Dendritic cell treated with granulocyte-macrophage colony-stimulating factor and Interleukin-4, amounts not matched to agents 40 ng/mL and 50 ng/mL, for 4 days (primary cell): ENCODE measurements at regions of chr4 and their contacts with region 1.

Region 1: GRCh38 chr4:26020083-26020668 is 106.2 kb downstream of the SMIM20 start:
- H3K4me3 Mint-ChIP-seq: no peak overlapping the region
- H3K27ac Mint-ChIP-seq: peak overlapping the region; percentile 70
- H3K4me1 Mint-ChIP-seq: peaks cover 71% of the 10 kb centered on the region
- H3K27me3 Mint-ChIP-seq: peaks cover 15% of the 10 kb centered on the region

Region 2: DNA sequence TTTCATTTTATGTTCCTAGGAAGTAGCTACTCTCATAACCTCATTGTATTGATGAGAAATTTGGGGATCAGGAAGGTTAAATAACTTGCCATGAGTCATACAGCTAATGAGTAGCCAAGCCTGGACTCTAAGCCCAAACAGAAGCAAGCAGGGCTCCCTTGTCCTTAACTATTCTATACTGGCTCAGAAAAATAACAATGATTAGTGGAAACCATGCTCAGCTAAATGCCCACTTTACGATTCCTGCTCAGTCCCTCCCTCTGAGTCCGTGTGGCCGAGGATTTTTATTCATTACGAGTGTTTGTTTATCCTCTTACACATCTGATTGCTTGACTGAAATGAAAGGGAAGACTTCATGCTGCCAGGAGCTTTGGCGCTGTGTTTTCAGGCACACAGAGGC is 263.7 kb before region 1 on chr4:
- intact Hi-C with region 1: no loop called
- H3K4me3 Mint-ChIP-seq: no peak overlapping the region
- H3K27ac Mint-ChIP-seq: no peak overlapping the region
- H3K4me1 Mint-ChIP-seq: peaks cover 16% of the 10 kb centered on the region
- H3K27me3 Mint-ChIP-seq: no peaks in the 10 kb centered on the region

Region 3: GRCh38 chr4:25986807-25987206 is 33.4 kb before region 1 on chr4:
- intact Hi-C with region 1: no loop called
- H3K4me3 Mint-ChIP-seq: no peak overlapping the region
- H3K27ac Mint-ChIP-seq: no peak overlapping the region
- H3K4me1 Mint-ChIP-seq: peaks cover 73% of the 10 kb centered on the region
- H3K27me3 Mint-ChIP-seq: peaks cover 10% of the 10 kb centered on the region

Region 4: GRCh38 chr4:26000274-26000950 is 19.8 kb before region 1 on chr4:
- intact Hi-C with region 1: loop called (anchors 2 kb)
- H3K4me3 Mint-ChIP-seq: no peak overlapping the region
- H3K27ac Mint-ChIP-seq: peak overlapping the region; percentile 89
- H3K4me1 Mint-ChIP-seq: peaks cover 61% of the 10 kb centered on the region
- H3K27me3 Mint-ChIP-seq: no peaks in the 10 kb centered on the region

Region 5: GRCh38 chr4:26281881-26282280 is 261.7 kb after region 1 on chr4:
- intact Hi-C with region 1: no loop called
- H3K4me3 Mint-ChIP-seq: no peak overlapping the region
- H3K27ac Mint-ChIP-seq: no peak overlapping the region
- H3K4me1 Mint-ChIP-seq: peaks cover 19% of the 10 kb centered on the region
- H3K27me3 Mint-ChIP-seq: no peaks in the 10 kb centered on the region